CD4-positive, alpha-beta memory T cell (primary cell): ENCODE measurements at regions of chr15 and their contacts with region 1.

Region 1: DNA sequence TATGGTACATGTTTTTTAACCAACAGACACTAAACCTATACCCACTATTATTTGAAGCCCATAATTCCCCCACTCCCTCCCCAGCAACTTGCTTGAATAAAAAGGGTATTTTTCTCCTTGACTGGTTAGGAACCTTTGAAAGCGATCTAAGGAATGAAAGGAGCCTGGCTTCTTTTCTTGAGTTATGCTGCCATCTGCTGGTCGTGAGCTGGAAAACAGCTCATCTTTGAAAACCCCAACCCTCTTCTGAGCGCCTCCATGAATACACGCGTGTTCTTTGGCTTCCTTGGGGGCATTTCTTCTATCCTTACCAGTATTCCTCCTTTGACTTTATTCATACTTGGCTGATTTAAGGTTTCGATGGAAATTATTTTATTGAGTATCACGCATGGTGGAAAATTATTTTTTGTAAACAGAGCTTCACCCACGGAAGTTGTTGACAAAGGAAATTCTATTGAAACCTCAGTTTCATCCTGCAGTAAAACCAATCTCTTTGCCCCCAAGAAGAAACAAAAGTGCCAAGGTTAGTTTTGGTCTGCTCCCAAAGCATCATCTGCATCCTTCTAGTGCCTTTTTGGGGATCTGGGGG is 171.6 kb downstream of the SV2B start:
- DNase-seq: peak; percentile 53 to 56 (median 55)
- H3K4me3 ChIP-seq: no peak overlapping the region
- H3K4me3 Mint-ChIP-seq: peak overlapping the region in 6 of 8 donors; percentile 47 to 74 (median 68)
- H3K27ac ChIP-seq: no peak overlapping the region
- H3K27ac Mint-ChIP-seq: peak overlapping the region in 4 of 7 donors; percentile 16 to 62 (median 38)
- H3K4me1 ChIP-seq: no peaks in the 10 kb centered on the region
- H3K4me1 Mint-ChIP-seq: peaks cover 4 to 6% (median 5%) of the 10 kb centered on the region in 4 donors
- H3K27me3 ChIP-seq: no peaks in the 10 kb centered on the region
- H3K27me3 Mint-ChIP-seq: peaks cover 10 to 14% of the 10 kb centered on the region in 2 donors

Region 2: GRCh38 chr15:90320061-90320884 is 951.4 kb before region 1 on chr15:
- CTCF ChIA-PET with region 1: interaction called, 4 read pairs
- POLR2A ChIA-PET with region 1: no interaction called
- intact Hi-C with region 1: loop called (anchors 5 kb)
- DNase-seq: peak; percentile 64 to 71 (median 68)
- H3K4me3 ChIP-seq: no peak overlapping the region
- H3K4me3 Mint-ChIP-seq: peak overlapping the region in 2 of 8 donors; percentile 53 to 56
- H3K27ac ChIP-seq: no peak overlapping the region
- H3K27ac Mint-ChIP-seq: peak overlapping the region in 2 of 7 donors; percentile 53 to 73
- H3K4me1 ChIP-seq: peaks cover 7% of the 10 kb centered on the region
- H3K4me1 Mint-ChIP-seq: peaks cover 5 to 8% (median 7%) of the 10 kb centered on the region in 4 donors
- H3K27me3 ChIP-seq: no peaks in the 10 kb centered on the region
- H3K27me3 Mint-ChIP-seq: peaks cover 0 to 3% of the 10 kb centered on the region in 2 donors

Region 3: DNA sequence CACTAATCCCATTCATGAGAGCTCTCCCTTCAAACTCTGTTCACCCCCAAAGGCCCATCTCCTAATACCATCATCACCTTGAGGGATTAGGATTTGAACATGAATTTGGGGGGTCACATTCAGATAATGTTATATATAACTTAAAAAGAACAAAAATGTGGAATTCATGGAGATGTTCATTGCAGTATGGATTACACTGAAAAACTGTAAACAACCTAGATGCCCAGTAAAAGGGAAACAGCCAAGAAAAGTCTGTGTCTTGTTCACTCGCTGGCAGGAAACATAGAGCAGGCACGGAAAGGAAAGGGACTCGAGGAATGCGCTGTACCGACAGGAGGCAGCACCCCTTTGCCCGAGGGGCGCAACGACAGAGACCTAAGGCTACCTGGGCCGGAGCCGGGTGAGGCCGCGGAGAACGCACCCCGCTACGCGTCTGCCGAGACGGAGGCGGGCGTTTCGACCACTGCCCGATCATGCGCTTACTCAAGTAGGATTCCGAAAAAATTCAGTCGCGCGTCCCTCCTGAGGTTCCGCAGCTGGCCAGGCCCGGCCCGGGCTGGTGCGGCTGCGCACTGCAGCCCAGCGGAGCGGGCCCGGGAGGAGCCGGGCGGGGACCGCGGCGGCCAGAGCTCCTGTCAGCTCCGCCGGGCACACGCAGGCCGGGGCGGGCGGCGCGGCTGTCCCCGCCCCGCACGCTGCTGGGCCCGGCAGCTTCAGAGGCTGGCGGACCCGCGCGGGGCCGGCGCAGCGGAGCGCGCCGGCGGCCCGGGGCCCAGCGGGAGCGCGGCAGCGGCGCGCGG is 369.4 kb before region 1 on chr15:
- CTCF ChIA-PET with region 1: interaction called, 3 read pairs
- POLR2A ChIA-PET with region 1: no interaction called
- intact Hi-C with region 1: loop called (anchors 2 kb)
- DNase-seq: peak; percentile 73 to 79 (median 75)
- H3K4me3 ChIP-seq: peak overlapping the region; percentile 61 to 80
- H3K4me3 Mint-ChIP-seq: peak overlapping the region; percentile 76 to 95 (median 92)
- H3K27ac ChIP-seq: peak overlapping the region; percentile 68
- H3K27ac Mint-ChIP-seq: peak overlapping the region; percentile 85 to 96 (median 94)
- H3K4me1 ChIP-seq: peaks cover 16% of the 10 kb centered on the region
- H3K4me1 Mint-ChIP-seq: peaks cover 10 to 38% (median 26%) of the 10 kb centered on the region in 4 donors
- H3K27me3 ChIP-seq: no peaks in the 10 kb centered on the region
- H3K27me3 Mint-ChIP-seq: no peaks in the 10 kb centered on the region

Region 4: GRCh38 chr15:91055548-91056331 is 215.9 kb before region 1 on chr15:
- CTCF ChIA-PET with region 1: interaction called, 91 read pairs
- POLR2A ChIA-PET with region 1: no interaction called
- intact Hi-C with region 1: loop called (anchors 1 kb)
- DNase-seq: peak in 4 of 5 donors; percentile 18 to 33 (median 26)
- H3K4me3 ChIP-seq: no peak overlapping the region
- H3K4me3 Mint-ChIP-seq: no peak overlapping the region
- H3K27ac ChIP-seq: no peak overlapping the region
- H3K27ac Mint-ChIP-seq: no peak overlapping the region
- H3K4me1 ChIP-seq: no peaks in the 10 kb centered on the region
- H3K4me1 Mint-ChIP-seq: peaks cover 0 to 3% (median 0%) of the 10 kb centered on the region in 4 donors
- H3K27me3 ChIP-seq: peaks cover 11% of the 10 kb centered on the region
- H3K27me3 Mint-ChIP-seq: peaks cover 40 to 47% of the 10 kb centered on the region in 2 donors

Region 5: DNA sequence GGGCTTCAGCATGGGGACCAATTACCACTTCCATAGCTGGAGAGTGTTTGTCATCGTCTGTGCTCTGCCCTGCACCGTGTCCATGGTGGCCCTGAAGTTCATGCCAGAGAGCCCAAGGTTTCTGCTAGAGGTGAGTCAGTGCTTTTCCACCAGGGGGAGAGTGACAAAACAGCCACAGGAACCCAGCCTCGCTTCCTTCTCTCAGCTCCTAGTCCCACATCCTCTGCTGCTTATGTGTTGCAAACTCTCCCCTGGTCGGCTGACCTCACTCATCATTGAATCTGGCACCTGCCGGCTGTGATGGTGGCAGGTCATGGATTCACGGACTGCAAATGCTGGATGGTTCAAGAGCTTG is 13.3 kb before region 1 on chr15:
- CTCF ChIA-PET with region 1: interaction called, 24 read pairs
- POLR2A ChIA-PET with region 1: no interaction called
- intact Hi-C with region 1: no loop called
- DNase-seq: no peak
- H3K4me3 ChIP-seq: no peak overlapping the region
- H3K4me3 Mint-ChIP-seq: no peak overlapping the region
- H3K27ac ChIP-seq: no peak overlapping the region
- H3K27ac Mint-ChIP-seq: peak overlapping the region in 1 of 7 donors; percentile 37
- H3K4me1 ChIP-seq: no peaks in the 10 kb centered on the region
- H3K4me1 Mint-ChIP-seq: peaks cover 0 to 3% (median 0%) of the 10 kb centered on the region in 4 donors
- H3K27me3 ChIP-seq: no peaks in the 10 kb centered on the region
- H3K27me3 Mint-ChIP-seq: peaks cover 17 to 27% of the 10 kb centered on the region in 2 donors

Region 6: DNA sequence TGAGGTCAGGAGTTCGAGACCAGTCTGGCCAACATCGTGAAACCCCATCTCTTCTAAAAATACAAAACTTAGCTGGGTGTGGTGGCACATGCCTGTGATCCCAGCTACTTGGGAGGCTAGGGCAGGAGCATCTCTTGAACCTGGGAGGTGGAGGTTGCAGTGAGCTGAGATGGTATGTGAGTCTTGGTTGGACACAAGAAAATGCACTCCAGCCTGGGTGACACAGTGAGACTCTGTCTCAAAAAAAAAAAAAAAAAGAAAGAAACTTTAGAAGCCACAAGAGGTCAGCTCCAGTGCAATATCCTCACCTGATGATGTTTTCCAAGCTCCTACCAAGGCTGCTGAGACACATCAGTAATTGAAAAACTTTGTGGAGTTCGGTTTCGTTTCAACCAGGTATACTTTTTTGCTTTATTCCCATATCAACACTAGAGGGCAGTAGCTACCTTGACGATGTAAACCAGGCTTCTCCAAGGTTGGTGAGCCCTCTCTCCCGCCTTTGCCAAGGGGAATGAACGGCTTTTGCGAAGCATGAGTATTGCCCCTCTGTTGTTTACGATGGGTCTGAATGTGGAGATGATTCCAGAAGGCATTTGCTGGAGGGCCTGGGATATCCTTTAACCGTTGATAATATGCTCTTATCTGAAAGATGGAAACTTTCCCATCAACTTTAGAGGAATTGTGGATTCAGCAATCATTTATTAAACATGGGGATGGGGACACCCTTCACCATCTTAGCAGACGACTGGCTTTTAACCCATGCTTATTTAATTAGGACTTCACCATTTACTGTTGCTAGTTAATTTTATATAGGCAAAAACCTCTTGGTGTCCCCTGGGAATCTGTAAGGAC is 31.2 kb after region 1 on chr15:
- CTCF ChIA-PET with region 1: interaction called, 10 read pairs
- POLR2A ChIA-PET with region 1: no interaction called
- intact Hi-C with region 1: no loop called
- DNase-seq: peak in 4 of 5 donors; percentile 54 to 63 (median 58)
- H3K4me3 ChIP-seq: no peak overlapping the region
- H3K4me3 Mint-ChIP-seq: peak overlapping the region in 6 of 8 donors; percentile 40 to 76 (median 58)
- H3K27ac ChIP-seq: no peak overlapping the region
- H3K27ac Mint-ChIP-seq: peak overlapping the region in 4 of 7 donors; percentile 1 to 65 (median 32)
- H3K4me1 ChIP-seq: peaks cover 47% of the 10 kb centered on the region
- H3K4me1 Mint-ChIP-seq: peaks cover 21 to 46% (median 34%) of the 10 kb centered on the region in 4 donors
- H3K27me3 ChIP-seq: no peaks in the 10 kb centered on the region
- H3K27me3 Mint-ChIP-seq: peaks cover 2 to 6% of the 10 kb centered on the region in 2 donors